Mammary epithelial cell (primary cell): ENCODE measurements at regions of chr13 and their contacts with region 1.

Region 1: GRCh38 chr13:35789335-35790165 is 313.1 kb upstream of the MAB21L1 start:
- DNase-seq: peak; percentile 19
- H3K4me3 ChIP-seq: no peak overlapping the region
- H3K27ac ChIP-seq: no peak overlapping the region
- H3K4me1 ChIP-seq: no peaks in the 10 kb centered on the region
- H3K27me3 ChIP-seq: no peaks in the 10 kb centered on the region
- CTCF ChIP-seq: peak; percentile 49 to 62

Region 2: GRCh38 chr13:35210261-35210660 is 579.3 kb before region 1 on chr13:
- CTCF ChIA-PET with region 1: interaction called, 4 read pairs
- dilution Hi-C with region 1: no loop called
- in situ Hi-C with region 1: no loop called
- intact Hi-C with region 1: loop called (anchors 5 kb)
- DNase-seq: no peak
- H3K4me3 ChIP-seq: no peak overlapping the region
- H3K27ac ChIP-seq: no peak overlapping the region
- H3K4me1 ChIP-seq: no peaks in the 10 kb centered on the region
- H3K27me3 ChIP-seq: no peaks in the 10 kb centered on the region
- CTCF ChIP-seq: peak in 1 of 2 donors; percentile 24

Region 3: DNA sequence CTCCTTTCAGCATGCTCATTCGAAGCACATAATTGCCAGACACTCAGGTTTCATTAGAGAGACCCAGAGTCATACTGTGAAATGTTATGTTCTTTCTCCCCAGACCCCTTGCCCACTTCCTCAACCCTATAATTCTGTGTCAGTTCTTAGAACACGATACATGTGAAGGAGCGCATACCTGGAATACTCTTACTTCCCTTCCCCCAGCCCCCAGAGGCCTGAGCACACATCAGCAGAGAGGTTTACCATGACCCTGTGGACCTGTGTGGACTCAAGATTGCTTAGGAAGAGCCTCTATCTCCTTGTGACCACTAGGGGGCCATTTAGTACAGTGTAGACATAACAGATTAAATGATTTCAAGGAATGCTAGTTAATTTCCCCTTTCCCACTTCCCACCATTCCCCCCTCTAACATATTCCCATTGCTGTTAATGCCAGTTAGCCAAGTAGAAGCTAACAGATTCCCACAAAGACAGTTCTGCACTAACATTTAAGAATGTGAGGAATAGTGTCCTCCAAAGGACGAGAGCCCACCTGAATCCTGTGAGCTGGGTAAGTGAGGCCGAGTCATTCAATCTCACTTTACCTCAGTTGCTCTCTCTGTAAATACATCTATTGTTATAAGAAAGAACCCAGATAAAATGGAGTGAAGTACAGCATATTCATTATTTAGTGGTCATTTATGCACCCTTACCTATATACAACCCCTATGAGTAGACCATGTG is 158.8 kb before region 1 on chr13:
- CTCF ChIA-PET with region 1: interaction called, 9 read pairs
- dilution Hi-C with region 1: no loop called
- in situ Hi-C with region 1: no loop called
- intact Hi-C with region 1: loop called (anchors 1 kb)
- DNase-seq: peak; percentile 40
- H3K4me3 ChIP-seq: no peak overlapping the region
- H3K27ac ChIP-seq: no peak overlapping the region
- H3K4me1 ChIP-seq: no peaks in the 10 kb centered on the region
- H3K27me3 ChIP-seq: no peaks in the 10 kb centered on the region
- CTCF ChIP-seq: peak; percentile 75 to 78

Region 4: GRCh38 chr13:35729926-35730627 is 59.5 kb before region 1 on chr13:
- CTCF ChIA-PET with region 1: interaction called, 7 read pairs
- dilution Hi-C with region 1: no loop called
- in situ Hi-C with region 1: no loop called
- intact Hi-C with region 1: loop called (anchors 2 kb)
- DNase-seq: no peak
- H3K4me3 ChIP-seq: no peak overlapping the region
- H3K27ac ChIP-seq: no peak overlapping the region
- H3K4me1 ChIP-seq: no peaks in the 10 kb centered on the region
- H3K27me3 ChIP-seq: no peaks in the 10 kb centered on the region
- CTCF ChIP-seq: no peak

Region 5: DNA sequence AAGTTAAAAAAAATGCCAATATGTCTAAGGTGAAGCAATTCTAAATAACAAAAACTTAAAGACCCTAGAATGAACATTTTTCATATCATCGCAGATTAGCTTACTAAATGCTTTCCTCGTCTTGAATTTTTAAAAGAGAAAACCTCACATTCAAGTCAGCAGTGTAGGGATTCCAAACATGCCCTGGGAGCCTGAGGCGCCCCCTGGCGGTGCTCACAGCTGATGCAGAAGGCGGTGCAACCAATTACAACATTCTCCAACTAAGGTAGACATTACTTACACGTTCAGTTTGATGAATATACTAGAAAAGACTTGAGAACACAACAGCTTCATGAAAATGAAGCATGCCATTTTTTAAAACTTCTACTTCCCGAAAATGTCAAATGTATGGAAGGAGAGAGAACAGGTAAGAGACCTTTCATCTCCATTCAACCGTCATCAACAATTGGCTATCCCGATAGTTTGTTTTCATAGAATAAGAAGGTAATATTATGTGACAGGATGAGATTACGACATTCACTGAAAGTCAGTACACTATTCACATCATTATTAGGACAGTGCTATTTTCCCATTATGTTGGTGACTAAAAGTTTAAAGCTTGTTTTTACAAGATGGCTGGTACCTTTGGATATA is 37.2 kb after region 1 on chr13:
- CTCF ChIA-PET with region 1: interaction called, 10 read pairs
- dilution Hi-C with region 1: no loop called
- in situ Hi-C with region 1: no loop called
- intact Hi-C with region 1: no loop called
- DNase-seq: no peak
- H3K4me3 ChIP-seq: no peak overlapping the region
- H3K27ac ChIP-seq: no peak overlapping the region
- H3K4me1 ChIP-seq: no peaks in the 10 kb centered on the region
- H3K27me3 ChIP-seq: no peaks in the 10 kb centered on the region
- CTCF ChIP-seq: peak; percentile 26 to 37

Region 6: DNA sequence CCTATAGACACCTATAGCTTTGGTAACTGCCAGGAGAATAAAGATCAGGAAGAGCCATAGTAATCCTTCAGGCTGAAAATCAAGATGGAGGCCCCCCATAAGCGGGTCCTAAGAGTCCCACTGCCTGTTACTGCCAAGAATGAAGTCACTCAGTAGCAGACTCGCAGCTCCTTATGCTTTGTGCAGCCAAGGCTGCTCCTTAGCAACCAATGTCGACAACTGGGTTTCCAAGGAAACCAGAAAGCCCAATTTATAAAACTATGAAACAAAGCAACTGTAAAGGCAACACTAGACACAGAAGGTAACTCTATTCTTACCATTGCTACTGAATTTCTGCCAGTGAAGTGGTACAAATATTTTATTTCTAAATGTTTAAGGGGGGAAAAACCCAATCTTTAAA is 285.1 kb after region 1 on chr13:
- CTCF ChIA-PET with region 1: no interaction called
- dilution Hi-C with region 1: no loop called
- in situ Hi-C with region 1: no loop called
- intact Hi-C with region 1: no loop called
- DNase-seq: no peak
- H3K4me3 ChIP-seq: no peak overlapping the region
- H3K27ac ChIP-seq: no peak overlapping the region
- H3K4me1 ChIP-seq: no peaks in the 10 kb centered on the region
- H3K27me3 ChIP-seq: no peaks in the 10 kb centered on the region
- CTCF ChIP-seq: no peak

Region 7: DNA sequence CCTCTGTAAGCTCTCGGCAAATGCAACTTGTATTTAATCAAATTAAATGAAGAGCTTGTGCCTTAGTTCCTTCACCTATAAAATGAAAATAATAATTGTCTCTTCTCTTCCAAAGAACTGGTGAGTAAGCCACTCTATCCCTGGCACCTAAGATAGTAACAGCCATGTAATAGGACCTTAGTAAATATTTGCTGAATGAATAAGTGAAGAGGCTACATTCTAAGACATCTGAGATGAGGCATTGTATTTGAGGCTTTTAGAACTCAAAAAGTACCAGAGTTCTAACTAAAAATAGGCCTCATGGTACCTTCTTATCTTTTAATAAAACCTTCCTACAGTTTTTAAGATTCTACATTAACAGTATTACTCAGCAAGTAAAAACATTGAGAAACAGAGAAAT is 358.9 kb after region 1 on chr13:
- CTCF ChIA-PET with region 1: no interaction called
- dilution Hi-C with region 1: no loop called
- in situ Hi-C with region 1: no loop called
- intact Hi-C with region 1: no loop called
- DNase-seq: no peak
- H3K4me3 ChIP-seq: no peak overlapping the region
- H3K27ac ChIP-seq: no peak overlapping the region
- H3K4me1 ChIP-seq: no peaks in the 10 kb centered on the region
- H3K27me3 ChIP-seq: no peaks in the 10 kb centered on the region
- CTCF ChIP-seq: no peak